ENCODE measurements at regions of chr12 and their contacts with region 1.

Region 1: GRCh38 chr12:55687746-55688145 is 20.0 kb downstream of the ITGA7 start:
- DNase-seq: no peak
- H3K4me3 ChIP-seq: no peak overlapping the region
- H3K27ac ChIP-seq: no peak overlapping the region
- H3K4me1 ChIP-seq: no peaks in the 10 kb centered on the region
- H3K27me3 ChIP-seq: no peaks in the 10 kb centered on the region
- CTCF ChIP-seq: no peak

Region 2: DNA sequence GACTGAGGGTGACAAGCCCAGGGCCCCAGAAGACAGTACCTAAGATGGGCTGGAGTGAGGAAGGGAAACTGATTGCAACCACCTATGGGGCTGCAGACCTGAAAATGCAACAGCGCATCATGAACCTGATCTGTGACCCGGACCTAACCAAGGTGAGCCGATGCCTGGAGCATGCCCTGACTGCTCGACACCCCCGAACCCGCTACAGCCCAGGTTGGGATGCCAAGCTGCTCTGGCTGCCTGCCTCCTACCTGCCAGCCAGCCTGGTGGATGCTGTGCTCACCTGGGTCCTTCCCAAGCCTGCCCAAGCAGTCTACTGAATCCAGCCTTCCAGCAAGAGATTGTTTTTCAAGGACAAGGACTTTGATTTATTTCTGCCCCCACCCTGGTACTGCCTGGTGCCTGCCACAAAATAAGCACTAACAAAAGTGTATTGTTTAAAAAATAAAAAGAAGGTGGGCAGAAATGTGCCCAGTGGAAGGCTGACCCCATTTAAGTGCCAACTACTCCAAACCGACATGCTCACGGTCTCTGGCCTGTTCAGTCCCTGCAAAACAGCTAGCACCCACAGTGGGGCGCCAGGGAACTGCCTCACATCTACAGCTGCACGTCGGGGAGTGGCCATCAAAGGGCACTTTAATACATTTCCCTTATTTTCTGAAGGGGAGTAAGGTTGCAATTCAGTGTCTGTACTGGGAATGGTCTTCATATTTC is 36.6 kb after region 1 on chr12:
- dilution Hi-C with region 1: loop called (anchors 5 kb)
- DNase-seq: no peak
- H3K4me3 ChIP-seq: no peak overlapping the region
- H3K27ac ChIP-seq: no peak overlapping the region
- H3K4me1 ChIP-seq: peaks cover 35% of the 10 kb centered on the region
- H3K27me3 ChIP-seq: no peaks in the 10 kb centered on the region
- CTCF ChIP-seq: peak; percentile 71 to 88 (median 84)

Region 3: GRCh38 chr12:55789171-55789570 is 101.4 kb after region 1 on chr12:
- dilution Hi-C with region 1: no loop called
- DNase-seq: no peak
- H3K4me3 ChIP-seq: no peak overlapping the region
- H3K27ac ChIP-seq: no peak overlapping the region
- H3K4me1 ChIP-seq: no peaks in the 10 kb centered on the region
- H3K27me3 ChIP-seq: no peaks in the 10 kb centered on the region
- CTCF ChIP-seq: no peak

Region 4: GRCh38 chr12:56258057-56258819 is 570.5 kb after region 1 on chr12 and contains the start of gene ANKRD52:
- dilution Hi-C with region 1: no loop called
- DNase-seq: no peak
- H3K4me3 ChIP-seq: peak within 1 kb of the TSS; percentile 75 to 93 (median 90)
- H3K27ac ChIP-seq: peak within 1 kb of the TSS; percentile 79
- H3K4me1 ChIP-seq: peaks cover 36% of the 10 kb centered on the region
- H3K27me3 ChIP-seq: no peaks in the 10 kb centered on the region
- CTCF ChIP-seq: peak in 2 of 3 experiments; percentile 55 to 80
- polyA plus RNA-seq, gene ANKRD52: 14.0 to 21.0 TPM (median 15.2 TPM) in 3 replicates